AG04449 (cell line): ENCODE measurements at regions of chr6 and their contacts with region 1.

Region 1: DNA sequence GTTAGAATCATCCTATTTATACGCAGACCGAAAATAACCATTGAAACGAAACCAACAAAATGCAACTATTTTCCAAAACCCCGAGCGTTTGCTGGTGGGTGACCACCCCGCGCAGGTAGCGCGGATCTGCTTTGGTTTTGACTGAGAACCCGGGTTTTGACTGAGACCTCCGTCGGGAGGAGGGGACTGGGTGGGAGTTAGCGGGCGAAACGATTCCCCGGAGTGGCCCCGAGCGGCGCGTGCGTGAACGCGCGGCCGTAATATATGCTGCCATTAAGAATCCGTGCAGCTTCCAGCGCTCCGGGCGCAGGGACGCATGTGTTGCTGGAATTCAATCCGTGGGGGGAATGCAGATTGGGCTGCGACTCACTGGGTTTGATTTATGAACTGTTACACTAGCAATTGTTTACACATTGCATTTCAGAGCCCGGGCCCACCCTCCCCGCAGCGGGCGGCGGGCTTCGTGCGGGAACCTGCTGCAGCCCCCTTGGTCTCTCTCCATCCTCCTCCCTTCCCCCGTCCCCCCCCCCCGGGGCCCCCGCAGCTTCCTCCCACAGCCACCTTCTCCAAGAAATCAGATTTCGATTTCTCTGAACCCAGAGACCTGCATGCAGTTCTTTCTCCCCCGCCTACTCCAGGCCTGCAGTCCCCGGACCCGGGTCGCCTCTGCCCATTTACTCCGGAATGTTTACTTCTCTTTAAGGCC is 9.9 kb downstream of the NRN1 start:
- DNase-seq: no peak
- H3K4me3 ChIP-seq: peak overlapping the region; percentile 70
- CTCF ChIP-seq: no peak

Region 2: GRCh38 chr6:6008648-6009421 is 12.0 kb after region 1 on chr6:
- CTCF ChIA-PET with region 1: interaction called, 9 read pairs
- POLR2A ChIA-PET with region 1: interaction called, 11 read pairs
- DNase-seq: no peak
- H3K4me3 ChIP-seq: peak overlapping the region; percentile 87
- CTCF ChIP-seq: no peak